Heart left ventricle (tissue), 16 donors: ENCODE measurements at regions of chr1 and their contacts with region 1.

Region 1: DNA sequence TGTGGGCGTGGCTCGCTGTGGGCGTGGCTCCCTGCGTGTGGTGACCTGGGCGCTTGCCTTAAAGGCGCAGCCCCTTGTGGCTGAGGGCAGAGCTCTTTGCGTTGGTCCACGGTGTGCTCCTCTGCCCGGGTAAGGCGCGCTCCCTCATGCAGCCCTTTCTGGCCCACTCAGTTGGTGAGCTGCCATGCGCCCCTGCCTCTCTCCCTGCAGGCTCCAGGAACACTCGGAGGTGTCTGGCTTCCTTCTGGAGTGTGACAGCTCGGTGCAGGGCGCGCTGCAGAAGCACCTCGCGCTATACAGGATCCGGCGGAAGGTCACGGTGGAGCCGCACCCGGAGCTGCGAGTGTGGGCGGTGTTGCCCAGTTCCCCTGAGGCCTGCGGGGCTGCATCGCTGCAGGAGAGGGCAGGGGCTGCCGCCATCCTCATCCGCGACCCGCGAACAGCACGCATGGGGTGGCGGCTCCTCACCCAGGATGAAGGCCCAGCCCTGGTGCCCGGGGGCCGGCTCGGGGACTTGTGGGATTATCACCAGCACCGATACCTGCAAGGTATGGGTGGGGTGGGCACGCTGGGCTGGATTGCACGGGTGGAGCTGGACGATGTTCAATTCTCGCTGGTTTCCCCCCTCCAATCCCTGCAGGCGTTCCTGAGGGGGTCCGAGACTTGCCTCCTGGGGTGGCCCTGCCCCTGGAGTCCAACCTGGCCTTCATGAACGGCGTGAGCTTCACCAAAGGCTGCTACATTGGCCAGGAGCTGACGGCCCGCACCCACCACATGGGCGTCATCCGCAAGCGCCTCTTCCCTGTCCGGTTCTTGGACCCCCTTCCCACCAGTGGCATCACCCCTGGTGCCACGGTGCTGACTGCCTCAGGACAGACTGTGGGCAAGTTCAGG is 9.1 kb downstream of the IBA57 start:
- DNase-seq: peak in 1 of 5 donors; percentile 60
- ATAC-seq: peak in 1 of 4 donors; percentile 7
- H3K4me3 ChIP-seq: no peak overlapping the region
- H3K27ac ChIP-seq: peak overlapping the region in 1 of 12 donors; percentile 29
- H3K4me1 ChIP-seq: peaks cover 0 to 30% (median 8%) of the 10 kb centered on the region in 12 donors
- H3K27me3 ChIP-seq: no peaks in the 10 kb centered on the region
- CTCF ChIP-seq: no peak
- POLR2A ChIP-seq: no peak

Region 2: DNA sequence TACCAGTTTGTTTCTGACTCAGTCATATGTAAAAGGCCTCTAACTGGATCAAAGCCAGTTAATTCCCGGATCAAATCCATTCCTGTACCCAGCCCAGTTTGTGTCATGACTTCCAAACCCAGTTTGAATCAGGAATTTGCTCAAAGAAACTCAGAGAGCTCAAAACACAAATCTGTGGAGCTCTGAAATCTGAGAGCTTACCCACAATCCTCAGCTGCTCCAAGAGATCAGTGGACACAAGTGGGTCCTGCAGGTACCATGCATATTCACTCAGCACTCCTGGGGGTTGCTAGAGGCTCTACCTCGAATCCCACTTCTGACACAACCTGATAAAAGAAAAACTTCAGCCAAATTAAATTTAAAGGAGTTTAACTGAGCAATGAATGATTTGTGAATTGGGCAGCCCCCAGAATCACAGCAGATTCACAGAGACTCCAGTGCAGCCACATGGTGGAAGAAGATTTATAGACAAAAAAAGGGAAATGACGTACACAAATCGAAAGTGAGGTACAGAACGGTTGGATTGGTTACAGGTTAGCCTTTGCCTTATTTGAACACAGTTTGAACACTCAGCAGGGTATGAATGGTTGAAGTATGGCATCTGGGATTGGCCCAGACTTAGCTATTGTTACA is 53.8 kb before region 1 on chr1:
- intact Hi-C with region 1: loop called in 1 of 10 experiments (anchors 10 kb)
- DNase-seq: no peak
- ATAC-seq: no peak
- H3K4me3 ChIP-seq: no peak overlapping the region
- H3K27ac ChIP-seq: no peak overlapping the region
- H3K4me1 ChIP-seq: no peaks in the 10 kb centered on the region
- H3K27me3 ChIP-seq: no peaks in the 10 kb centered on the region
- CTCF ChIP-seq: no peak
- POLR2A ChIP-seq: no peak

Region 3: DNA sequence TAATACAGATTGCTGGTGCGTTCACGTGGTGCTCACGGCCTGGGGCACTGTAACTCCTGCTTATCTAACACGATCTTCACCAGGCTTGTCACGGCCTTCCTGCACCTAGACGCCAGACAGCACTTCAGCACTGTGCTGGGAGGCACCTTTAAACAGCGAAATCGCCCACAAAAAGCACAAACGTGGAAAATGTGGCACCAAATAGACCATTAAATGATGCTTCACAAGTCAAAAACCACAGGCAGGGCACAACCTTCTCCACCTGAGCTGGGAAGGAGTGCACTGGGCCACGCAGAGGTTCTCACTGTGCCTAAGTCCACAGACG is 10.9 kb after region 1 on chr1:
- intact Hi-C with region 1: no loop called
- DNase-seq: no peak
- ATAC-seq: no peak
- H3K4me3 ChIP-seq: no peak overlapping the region
- H3K27ac ChIP-seq: no peak overlapping the region
- H3K4me1 ChIP-seq: no peaks in the 10 kb centered on the region
- H3K27me3 ChIP-seq: no peaks in the 10 kb centered on the region
- CTCF ChIP-seq: no peak
- POLR2A ChIP-seq: no peak

Region 4: GRCh38 chr1:228226956-228227791 is 52.4 kb after region 1 on chr1:
- intact Hi-C with region 1: no loop called
- DNase-seq: no peak
- ATAC-seq: peak; percentile 12 to 33 (median 22)
- H3K4me3 ChIP-seq: no peak overlapping the region
- H3K27ac ChIP-seq: peak overlapping the region in 2 of 12 donors; percentile 3 to 8
- H3K4me1 ChIP-seq: peaks cover 0 to 55% (median 7%) of the 10 kb centered on the region in 12 donors
- H3K27me3 ChIP-seq: no peaks in the 10 kb centered on the region
- CTCF ChIP-seq: peak in 3 of 12 donors; percentile 4 to 9 (median 6)
- POLR2A ChIP-seq: no peak